Calu3 (cell line): ENCODE measurements at regions of chr17 and their contacts with region 1.

Region 1: GRCh38 chr17:28494445-28495188 is 11.5 kb upstream of the FOXN1 start:
- DNase-seq: peak; percentile 90
- H3K4me3 Mint-ChIP-seq: no peak overlapping the region
- H3K27ac Mint-ChIP-seq: no peak overlapping the region
- H3K4me1 Mint-ChIP-seq: peaks cover 7% of the 10 kb centered on the region
- H3K27me3 Mint-ChIP-seq: peaks cover 29% of the 10 kb centered on the region
- CTCF ChIP-seq: peak; percentile 91

Region 2: DNA sequence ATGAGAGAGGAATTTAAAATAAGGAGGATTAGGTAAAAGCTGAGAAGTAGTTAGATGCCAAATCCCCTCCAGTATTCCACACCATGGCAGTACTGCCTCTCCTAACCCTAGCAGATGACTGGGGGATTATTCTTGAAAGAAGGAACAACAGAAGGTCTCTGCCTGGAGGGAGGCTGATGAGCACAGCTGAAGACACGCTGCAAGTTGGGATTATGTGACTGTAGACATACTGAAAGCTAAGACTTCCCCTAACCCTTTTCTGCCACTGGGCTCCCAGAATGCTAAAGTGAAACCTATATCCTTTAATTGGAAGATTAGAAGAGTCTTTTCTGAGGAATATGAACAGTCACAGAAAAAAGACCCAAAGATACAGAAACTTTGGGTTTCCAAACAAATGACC is 60.9 kb before region 1 on chr17:
- CTCF ChIA-PET with region 1: no interaction called
- intact Hi-C with region 1: no loop called
- DNase-seq: no peak
- H3K4me3 Mint-ChIP-seq: no peak overlapping the region
- H3K27ac Mint-ChIP-seq: no peak overlapping the region
- H3K4me1 Mint-ChIP-seq: no peaks in the 10 kb centered on the region
- H3K27me3 Mint-ChIP-seq: peaks cover 42% of the 10 kb centered on the region
- CTCF ChIP-seq: no peak

Region 3: DNA sequence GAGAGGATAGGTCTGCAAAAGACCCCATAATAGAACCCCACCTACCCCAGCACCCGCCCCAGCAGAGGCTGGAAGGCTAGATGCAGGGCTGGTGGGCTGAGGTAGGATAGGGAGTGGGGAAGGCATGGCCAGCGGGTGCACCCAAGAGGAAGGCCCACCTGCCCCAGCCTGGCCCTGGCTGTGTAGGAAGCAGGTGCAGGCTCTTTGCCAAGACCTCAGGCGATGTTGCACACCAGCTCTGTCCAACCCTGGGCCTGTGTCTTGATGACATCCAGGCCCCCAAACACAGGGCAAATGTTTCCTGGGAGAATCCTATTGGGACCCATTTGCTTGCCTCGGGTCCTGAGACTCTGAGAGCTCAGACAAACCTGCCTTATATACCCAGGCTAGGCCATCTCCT is 45.6 kb after region 1 on chr17:
- CTCF ChIA-PET with region 1: interaction called, 4 read pairs
- intact Hi-C with region 1: loop called (anchors 1 kb)
- DNase-seq: no peak
- H3K4me3 Mint-ChIP-seq: no peak overlapping the region
- H3K27ac Mint-ChIP-seq: no peak overlapping the region
- H3K4me1 Mint-ChIP-seq: no peaks in the 10 kb centered on the region
- H3K27me3 Mint-ChIP-seq: peaks cover 28% of the 10 kb centered on the region
- CTCF ChIP-seq: no peak

Region 4: DNA sequence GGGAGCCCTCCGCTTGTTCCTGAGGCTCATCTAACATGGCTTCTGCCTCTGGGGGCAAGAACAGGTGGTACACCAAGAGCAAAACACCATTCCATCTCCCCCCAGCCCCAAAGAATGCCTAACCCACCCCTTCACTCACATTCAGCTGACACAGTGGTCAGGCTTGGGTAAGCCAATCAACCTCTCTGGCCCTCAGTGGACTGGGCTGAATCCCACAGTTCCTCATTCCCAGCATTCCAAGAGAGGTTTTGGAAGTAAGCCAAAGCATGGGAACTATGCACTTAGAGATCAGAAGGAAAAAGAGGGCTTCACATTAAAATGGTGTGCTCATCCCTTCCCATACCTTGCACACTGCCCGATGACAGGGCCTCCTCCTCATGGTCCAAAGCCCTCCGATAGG is 68.9 kb after region 1 on chr17:
- CTCF ChIA-PET with region 1: no interaction called
- intact Hi-C with region 1: no loop called
- DNase-seq: peak; percentile 21
- H3K4me3 Mint-ChIP-seq: no peak overlapping the region
- H3K27ac Mint-ChIP-seq: no peak overlapping the region
- H3K4me1 Mint-ChIP-seq: peaks cover 19% of the 10 kb centered on the region
- H3K27me3 Mint-ChIP-seq: no peaks in the 10 kb centered on the region
- CTCF ChIP-seq: no peak

Region 5: DNA sequence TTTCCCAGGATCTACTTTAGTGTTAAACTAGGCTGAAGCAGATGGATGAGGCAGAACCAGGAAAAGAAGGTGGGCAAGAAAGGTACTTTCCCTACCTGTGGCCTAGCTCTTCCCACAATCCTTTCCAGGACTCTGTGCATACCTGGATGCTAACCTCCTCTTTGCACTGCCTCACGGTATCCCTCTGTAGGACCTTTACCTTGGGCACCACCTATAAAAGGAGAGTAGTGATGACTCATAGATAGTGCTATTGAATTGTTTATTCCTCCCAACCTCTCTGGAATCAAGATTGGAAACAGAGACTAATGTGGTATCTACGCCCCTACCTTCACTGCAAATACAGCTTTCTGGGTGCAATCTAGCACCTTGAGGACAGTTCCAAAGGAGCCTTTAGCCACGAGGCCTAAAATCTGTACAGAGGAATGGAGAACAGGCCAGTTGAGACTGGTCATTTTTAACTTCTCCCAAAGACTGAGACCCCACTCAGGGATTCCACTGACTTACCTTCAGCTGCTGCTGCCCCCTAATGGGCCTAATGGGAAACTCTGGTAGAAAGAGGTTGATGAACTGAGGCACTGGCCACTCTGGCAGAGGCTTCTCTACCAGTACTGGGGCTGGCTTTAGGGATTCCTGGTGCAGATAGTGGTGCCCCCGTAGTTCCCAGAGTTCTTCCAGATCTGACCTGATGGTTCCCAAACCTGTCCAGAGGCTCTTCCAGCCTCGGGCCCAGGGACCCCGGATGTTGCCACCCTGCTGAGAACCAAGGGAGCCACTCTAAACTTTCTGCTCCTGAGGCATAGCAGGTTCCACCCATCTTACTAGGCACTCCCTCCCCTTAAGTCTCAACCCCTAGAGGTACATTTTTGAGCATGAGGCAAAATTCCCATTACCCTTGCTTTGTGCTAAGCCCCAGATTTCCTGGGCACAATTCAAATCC is 118.6 kb after region 1 on chr17:
- CTCF ChIA-PET with region 1: interaction called, 5 read pairs
- intact Hi-C with region 1: loop called (anchors 5 kb)
- DNase-seq: peak; percentile 46
- H3K4me3 Mint-ChIP-seq: no peak overlapping the region
- H3K27ac Mint-ChIP-seq: no peak overlapping the region
- H3K4me1 Mint-ChIP-seq: no peaks in the 10 kb centered on the region
- H3K27me3 Mint-ChIP-seq: no peaks in the 10 kb centered on the region
- CTCF ChIP-seq: peak; percentile 24